ENCODE measurements at regions of chr13 and their contacts with region 1.

Region 1: GRCh38 chr13:54383604-54384003 is 1355.0 kb downstream of the OLFM4 start:
- DNase-seq: no peak
- ATAC-seq: no peak
- H3K4me3 ChIP-seq: no peak overlapping the region
- H3K27ac ChIP-seq: no peak overlapping the region
- H3K4me1 ChIP-seq: no peaks in the 10 kb centered on the region
- H3K27me3 ChIP-seq: no peaks in the 10 kb centered on the region
- CTCF ChIP-seq: no peak

Region 2: DNA sequence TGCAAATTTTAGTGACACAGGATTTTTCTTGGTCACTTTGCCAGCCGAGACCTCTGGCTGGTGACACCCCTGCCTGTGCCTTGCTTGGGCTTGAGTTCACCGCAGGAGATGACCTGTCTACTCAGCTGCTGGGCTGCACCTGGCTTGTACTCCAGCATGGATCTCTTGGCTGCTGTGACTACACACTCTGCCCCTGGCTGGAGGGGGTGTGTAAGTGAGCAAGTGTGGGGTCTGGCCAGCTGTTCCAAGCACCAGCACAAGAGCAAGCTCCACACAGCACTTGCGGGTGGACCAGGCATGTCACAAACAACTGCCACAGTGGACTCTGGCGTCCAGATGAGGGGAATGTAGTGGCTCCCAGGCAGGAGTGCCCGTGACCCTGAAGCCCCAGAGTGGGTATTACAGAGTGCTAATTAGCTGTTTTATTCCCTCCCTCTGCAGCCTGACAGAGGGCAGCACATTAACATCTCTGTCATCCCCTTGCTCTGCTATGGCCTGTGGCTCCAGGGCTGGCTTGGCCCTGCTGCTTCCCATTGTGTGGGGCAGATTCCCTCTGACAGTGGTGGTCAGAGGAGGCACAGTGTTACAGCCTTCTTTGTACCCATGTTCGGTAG is 32.3 kb after region 1 on chr13:
- intact Hi-C with region 1: loop called in 1 of 2 experiments (anchors 5 kb)
- DNase-seq: no peak
- ATAC-seq: no peak
- H3K4me3 ChIP-seq: no peak overlapping the region
- H3K27ac ChIP-seq: no peak overlapping the region
- H3K4me1 ChIP-seq: no peaks in the 10 kb centered on the region
- H3K27me3 ChIP-seq: no peaks in the 10 kb centered on the region
- CTCF ChIP-seq: no peak

Region 3: DNA sequence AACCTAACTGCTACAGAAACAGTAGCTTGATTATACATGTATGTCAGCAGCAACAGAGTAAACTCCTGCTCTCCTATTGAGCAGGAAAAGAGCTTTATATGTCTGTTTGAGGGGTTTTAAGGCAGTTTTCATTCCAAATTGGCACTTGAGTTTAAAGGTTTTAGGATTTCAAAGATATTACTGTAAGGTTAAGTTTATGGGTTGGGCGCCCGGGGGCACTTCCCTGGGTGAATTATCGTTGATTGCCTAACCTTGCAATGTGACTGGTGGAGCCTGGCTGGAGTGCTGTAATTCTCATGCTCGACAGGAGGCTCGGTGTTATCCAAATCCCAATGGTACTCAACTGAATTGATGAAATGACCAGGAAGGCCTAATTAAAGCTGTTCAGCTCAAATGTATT is 231.1 kb after region 1 on chr13:
- intact Hi-C with region 1: no loop called
- DNase-seq: peak in 1 of 4 donors; percentile 28
- ATAC-seq: no peak
- H3K4me3 ChIP-seq: no peak overlapping the region
- H3K27ac ChIP-seq: no peak overlapping the region
- H3K4me1 ChIP-seq: no peaks in the 10 kb centered on the region
- H3K27me3 ChIP-seq: no peaks in the 10 kb centered on the region
- CTCF ChIP-seq: no peak